Mammary epithelial cell (primary cell): ENCODE measurements at regions of chr6 and their contacts with region 1.

Region 1: GRCh38 chr6:97186416-97186999 is 96.5 kb downstream of the MMS22L start:
- DNase-seq: peak; percentile 48
- H3K4me3 ChIP-seq: no peak overlapping the region
- H3K27ac ChIP-seq: no peak overlapping the region
- H3K4me1 ChIP-seq: no peaks in the 10 kb centered on the region
- H3K27me3 ChIP-seq: no peaks in the 10 kb centered on the region
- CTCF ChIP-seq: peak; percentile 87 to 97

Region 2: DNA sequence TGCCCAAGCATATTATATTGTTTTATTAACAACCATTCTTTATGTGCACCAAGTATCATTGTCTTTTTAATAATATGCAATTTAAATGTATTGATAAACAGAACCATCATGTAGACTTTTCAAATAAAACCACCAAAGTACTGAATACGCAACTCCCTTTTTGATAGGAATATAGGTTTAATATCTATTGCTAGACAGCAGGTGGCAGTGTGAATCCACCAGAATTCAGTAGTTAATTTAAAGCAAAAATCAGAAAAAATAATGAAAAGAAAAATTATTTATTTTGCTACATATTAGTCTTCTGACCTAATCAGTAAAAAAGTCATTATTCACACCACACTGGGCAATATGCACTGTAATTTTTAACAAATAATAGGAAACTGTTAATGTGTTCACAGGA is 118.3 kb before region 1 on chr6:
- CTCF ChIA-PET with region 1: no interaction called
- dilution Hi-C with region 1: no loop called
- in situ Hi-C with region 1: no loop called
- intact Hi-C with region 1: loop called (anchors 10 kb)
- DNase-seq: peak; percentile 3
- H3K4me3 ChIP-seq: no peak overlapping the region
- H3K27ac ChIP-seq: no peak overlapping the region
- H3K4me1 ChIP-seq: no peaks in the 10 kb centered on the region
- H3K27me3 ChIP-seq: peaks cover 2% of the 10 kb centered on the region
- CTCF ChIP-seq: peak; percentile 41 to 58